Right ventricle myocardium superior (tissue), 1 donor: ENCODE measurements at regions of chr2 and their contacts with region 1.

Region 1: GRCh38 chr2:222976521-222977076 is 75.4 kb upstream of the KCNE4 start:
- DNase-seq: no peak
- ATAC-seq: no peak

Region 2: DNA sequence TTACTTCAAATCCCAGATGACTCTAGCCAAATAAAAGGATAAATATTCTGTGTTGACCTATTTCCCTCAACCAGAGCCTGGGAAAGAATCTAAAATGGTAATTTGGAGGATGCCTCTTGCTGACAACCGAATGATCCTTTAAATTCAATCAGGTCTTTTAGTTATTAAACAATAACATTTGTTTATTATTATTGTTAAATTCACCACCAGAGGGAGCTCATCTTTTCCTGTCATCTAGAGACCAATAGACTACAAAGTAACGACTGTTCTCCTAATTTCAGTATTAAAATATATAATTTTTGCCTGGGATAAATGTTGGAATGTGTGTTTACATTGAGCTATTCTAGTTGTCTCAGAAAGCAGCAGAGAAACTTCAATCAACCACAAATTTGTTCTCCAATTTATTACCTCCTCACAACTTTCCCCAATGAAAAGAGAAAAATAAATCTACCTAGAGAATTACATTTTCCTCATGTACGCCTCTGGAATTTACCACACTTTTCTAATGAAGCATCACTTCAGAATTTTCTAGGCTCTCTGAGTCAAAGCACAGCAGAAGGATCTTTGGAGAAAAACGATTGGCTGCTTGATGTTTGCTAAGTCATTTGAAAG is 482.8 kb after region 1 on chr2:
- intact Hi-C with region 1: loop called (anchors 10 kb)
- DNase-seq: no peak
- ATAC-seq: no peak

Region 3: GRCh38 chr2:223797811-223798721 is 821.5 kb after region 1 on chr2:
- intact Hi-C with region 1: loop called (anchors 2 kb)
- DNase-seq: no peak
- ATAC-seq: peak; percentile 51